T-cell (primary cell): ENCODE measurements at regions of chr11 and their contacts with region 1.

Region 1: GRCh38 chr11:77602381-77603088 is 12.8 kb downstream of the AQP11 start:
- DNase-seq: no peak
- ATAC-seq: no peak
- H3K4me3 ChIP-seq: no peak overlapping the region
- H3K4me3 Mint-ChIP-seq: no peak overlapping the region
- H3K27ac ChIP-seq: no peak overlapping the region
- H3K27ac Mint-ChIP-seq: no peak overlapping the region
- H3K4me1 ChIP-seq: no peaks in the 10 kb centered on the region
- H3K4me1 Mint-ChIP-seq: no peaks in the 10 kb centered on the region
- H3K27me3 ChIP-seq: no peaks in the 10 kb centered on the region
- H3K27me3 Mint-ChIP-seq: no peaks in the 10 kb centered on the region

Region 2: DNA sequence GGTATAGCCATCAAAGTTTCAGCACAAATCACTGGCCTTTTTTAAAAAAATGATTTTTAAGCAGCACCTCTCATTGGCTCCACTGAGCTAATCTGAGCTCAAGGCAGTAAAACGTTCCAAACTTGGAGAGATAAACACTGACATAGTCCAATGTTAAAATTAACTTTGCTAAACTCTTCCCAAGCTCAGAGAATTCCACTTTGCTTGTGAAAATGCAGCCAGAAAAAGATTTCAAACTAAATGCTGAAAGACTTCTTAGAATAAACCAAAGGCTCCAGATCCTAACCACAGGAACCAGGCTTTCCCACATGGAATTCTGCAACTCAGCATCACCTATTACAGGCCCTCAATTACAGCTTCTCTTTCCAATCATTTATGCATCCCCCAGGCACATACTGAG is 216.4 kb before region 1 on chr11:
- CTCF ChIA-PET with region 1: no interaction called
- POLR2A ChIA-PET with region 1: no interaction called
- DNase-seq: no peak
- ATAC-seq: no peak
- H3K4me3 ChIP-seq: no peak overlapping the region
- H3K4me3 Mint-ChIP-seq: no peak overlapping the region
- H3K27ac ChIP-seq: no peak overlapping the region
- H3K27ac Mint-ChIP-seq: no peak overlapping the region
- H3K4me1 ChIP-seq: peaks cover 0 to 7% of the 10 kb centered on the region in 2 experiments
- H3K4me1 Mint-ChIP-seq: peaks cover 0 to 2% (median 0%) of the 10 kb centered on the region in 3 donors
- H3K27me3 ChIP-seq: no peaks in the 10 kb centered on the region
- H3K27me3 Mint-ChIP-seq: no peaks in the 10 kb centered on the region

Region 3: DNA sequence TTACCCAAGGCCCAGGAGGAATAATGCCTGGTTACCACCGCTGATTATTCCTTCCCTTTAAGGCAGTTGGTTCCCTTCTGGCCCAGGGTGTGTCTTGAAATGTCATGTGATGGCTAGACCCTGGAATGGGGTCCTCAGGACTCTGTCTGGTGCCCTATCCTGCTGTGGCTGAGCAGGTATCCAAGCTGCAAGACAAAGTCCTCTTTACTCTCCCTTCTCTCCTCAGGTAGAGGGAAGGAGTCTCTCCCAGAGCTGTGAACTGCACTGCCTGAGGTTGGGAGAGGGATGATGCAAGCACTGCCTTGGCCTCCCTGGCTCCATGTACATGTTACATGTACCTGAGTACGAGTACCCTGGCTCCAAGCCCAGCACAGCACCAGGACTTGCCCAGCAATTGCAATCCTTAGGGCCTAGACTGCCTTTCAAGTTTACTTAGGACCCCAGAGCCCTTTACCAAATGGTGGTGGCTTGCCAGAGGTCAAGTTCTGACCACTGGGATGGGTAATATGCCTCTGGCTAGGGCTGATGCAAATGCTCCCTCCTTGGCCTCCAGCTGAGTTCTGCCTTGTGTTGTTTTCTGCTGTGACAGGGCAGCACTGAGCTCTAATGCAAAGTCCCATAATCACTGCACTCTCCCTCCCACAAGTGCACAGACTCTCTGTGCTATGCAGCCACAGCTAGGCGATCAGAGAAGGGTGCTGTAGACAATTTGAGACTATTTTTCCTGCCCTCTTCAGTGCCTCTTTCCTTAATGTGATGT is 33.4 kb before region 1 on chr11:
- CTCF ChIA-PET with region 1: interaction called in 1 of 2 experiments, 11 read pairs
- POLR2A ChIA-PET with region 1: no interaction called
- DNase-seq: no peak
- ATAC-seq: no peak
- H3K4me3 ChIP-seq: no peak overlapping the region
- H3K4me3 Mint-ChIP-seq: no peak overlapping the region
- H3K27ac ChIP-seq: no peak overlapping the region
- H3K27ac Mint-ChIP-seq: no peak overlapping the region
- H3K4me1 ChIP-seq: no peaks in the 10 kb centered on the region
- H3K4me1 Mint-ChIP-seq: no peaks in the 10 kb centered on the region
- H3K27me3 ChIP-seq: peaks cover 0 to 11% of the 10 kb centered on the region in 2 experiments
- H3K27me3 Mint-ChIP-seq: peaks cover 21 to 30% of the 10 kb centered on the region in 2 donors

Region 4: GRCh38 chr11:77630157-77630710 is 27.7 kb after region 1 on chr11:
- CTCF ChIA-PET with region 1: interaction called in 1 of 2 experiments, 12 read pairs
- POLR2A ChIA-PET with region 1: no interaction called
- DNase-seq: no peak
- ATAC-seq: no peak
- H3K4me3 ChIP-seq: no peak overlapping the region
- H3K4me3 Mint-ChIP-seq: no peak overlapping the region
- H3K27ac ChIP-seq: no peak overlapping the region
- H3K27ac Mint-ChIP-seq: no peak overlapping the region
- H3K4me1 ChIP-seq: peaks cover 5 to 9% of the 10 kb centered on the region in 2 experiments
- H3K4me1 Mint-ChIP-seq: peaks cover 25 to 35% (median 34%) of the 10 kb centered on the region in 3 donors
- H3K27me3 ChIP-seq: no peaks in the 10 kb centered on the region
- H3K27me3 Mint-ChIP-seq: no peaks in the 10 kb centered on the region